CD4-positive, alpha-beta T cell (primary cell): ENCODE measurements at regions of chr16 and their contacts with region 1.

Region 1: GRCh38 chr16:84144859-84145639 is at the starts of genes DNAAF1 and HSDL1:
- DNase-seq: peak; percentile 87 to 98 (median 95)
- ATAC-seq: peak; percentile 81
- H3K4me3 ChIP-seq: peak within 1 kb of the TSS; percentile 79
- H3K4me3 Mint-ChIP-seq: peak within 1 kb of the TSS; percentile 93
- H3K27ac ChIP-seq: peak within 1 kb of the TSS in 1 of 2 donors; percentile 59
- H3K27ac Mint-ChIP-seq: peak within 1 kb of the TSS; percentile 85
- H3K4me1 ChIP-seq: peaks cover 20% of the 10 kb centered on the region
- H3K4me1 Mint-ChIP-seq: peaks cover 18% of the 10 kb centered on the region
- H3K27me3 ChIP-seq: peaks cover 0 to 7% of the 10 kb centered on the region in 2 experiments
- H3K27me3 Mint-ChIP-seq: no peaks in the 10 kb centered on the region
- CTCF ChIP-seq: no peak
- total RNA-seq, gene DNAAF1: not detected
- total RNA-seq, gene HSDL1: 9.4 to 12.1 TPM

Region 2: DNA sequence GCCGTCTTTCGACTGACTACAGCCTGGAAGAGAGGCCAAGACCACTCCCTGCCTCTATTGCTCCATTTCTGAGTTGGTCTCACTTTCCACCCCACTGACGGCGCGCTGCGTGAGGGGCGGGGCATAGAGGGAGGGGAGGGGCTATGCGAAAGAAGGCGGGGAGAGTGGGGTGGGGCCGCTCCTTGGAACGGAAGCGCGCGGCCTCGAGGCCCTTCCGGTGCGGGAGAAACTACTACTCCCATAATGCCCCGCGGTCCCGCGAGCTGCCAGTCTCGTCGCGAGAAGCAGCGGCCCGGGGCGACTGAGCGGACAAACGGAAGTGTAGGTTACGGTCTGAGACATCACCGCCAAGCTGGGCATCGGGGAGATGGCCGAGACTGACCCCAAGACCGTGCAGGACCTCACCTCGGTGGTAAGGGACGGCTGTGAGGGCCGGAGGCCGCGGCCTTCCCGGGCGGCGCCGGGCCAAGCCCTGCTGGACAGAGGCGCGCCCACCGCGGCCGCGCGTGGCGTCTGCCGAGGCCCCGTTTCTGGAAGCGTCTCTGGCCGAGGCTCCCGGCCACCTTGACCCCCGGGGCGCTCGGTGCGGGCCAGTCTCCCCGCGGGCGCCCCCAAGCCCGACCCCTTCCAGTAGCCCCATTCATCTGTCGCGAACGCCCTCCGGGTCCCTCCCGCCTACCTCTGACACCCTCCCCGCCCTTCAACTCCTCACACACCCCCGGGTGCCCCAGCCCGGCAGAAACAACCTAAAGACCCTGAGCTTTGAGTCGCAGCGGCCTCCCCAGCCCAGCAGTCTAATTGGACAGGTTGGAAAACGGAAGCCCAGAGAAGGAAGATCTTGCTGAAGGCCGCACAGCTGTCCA is 337.1 kb before region 1 on chr16 and contains the start of gene HSBP1:
- CTCF ChIA-PET with region 1: no interaction called
- POLR2A ChIA-PET with region 1: no interaction called
- intact Hi-C with region 1: loop called in 1 of 2 experiments (anchors 2 kb)
- DNase-seq: peak; percentile 89 to 96 (median 91)
- ATAC-seq: peak; percentile 99
- H3K4me3 ChIP-seq: peak within 1 kb of the TSS; percentile 86
- H3K4me3 Mint-ChIP-seq: peak within 1 kb of the TSS; percentile 100
- H3K27ac ChIP-seq: peak within 1 kb of the TSS; percentile 46 to 74
- H3K27ac Mint-ChIP-seq: peak within 1 kb of the TSS; percentile 93
- H3K4me1 ChIP-seq: peaks cover 28% of the 10 kb centered on the region
- H3K4me1 Mint-ChIP-seq: peaks cover 43% of the 10 kb centered on the region
- H3K27me3 ChIP-seq: no peaks in the 10 kb centered on the region
- H3K27me3 Mint-ChIP-seq: no peaks in the 10 kb centered on the region
- CTCF ChIP-seq: no peak
- total RNA-seq, gene HSBP1: 17.4 to 21.9 TPM

Region 3: GRCh38 chr16:84084570-84085270 is 60.3 kb before region 1 on chr16:
- CTCF ChIA-PET with region 1: interaction called, 4 read pairs
- POLR2A ChIA-PET with region 1: no interaction called
- intact Hi-C with region 1: loop called (anchors 1 to 2 kb)
- DNase-seq: peak; percentile 50 to 87 (median 64)
- ATAC-seq: peak; percentile 85
- H3K4me3 ChIP-seq: no peak overlapping the region
- H3K4me3 Mint-ChIP-seq: peak overlapping the region; percentile 42
- H3K27ac ChIP-seq: no peak overlapping the region
- H3K27ac Mint-ChIP-seq: peak overlapping the region; percentile 63
- H3K4me1 ChIP-seq: peaks cover 28% of the 10 kb centered on the region
- H3K4me1 Mint-ChIP-seq: peaks cover 48% of the 10 kb centered on the region
- H3K27me3 ChIP-seq: no peaks in the 10 kb centered on the region
- H3K27me3 Mint-ChIP-seq: no peaks in the 10 kb centered on the region
- CTCF ChIP-seq: peak; percentile 81

Region 4: GRCh38 chr16:84116720-84117493 is 28.1 kb before region 1 on chr16 and contains the start of gene MBTPS1:
- CTCF ChIA-PET with region 1: interaction called, 12 read pairs
- POLR2A ChIA-PET with region 1: interaction called, 38 read pairs
- intact Hi-C with region 1: loop called (anchors 1 to 2 kb)
- DNase-seq: peak; percentile 94 to 99 (median 98)
- ATAC-seq: peak; percentile 84
- H3K4me3 ChIP-seq: peak within 1 kb of the TSS; percentile 91
- H3K4me3 Mint-ChIP-seq: peak within 1 kb of the TSS; percentile 96
- H3K27ac ChIP-seq: peak within 1 kb of the TSS; percentile 84 to 85
- H3K27ac Mint-ChIP-seq: peak within 1 kb of the TSS; percentile 98
- H3K4me1 ChIP-seq: peaks cover 37% of the 10 kb centered on the region
- H3K4me1 Mint-ChIP-seq: peaks cover 34% of the 10 kb centered on the region
- H3K27me3 ChIP-seq: no peaks in the 10 kb centered on the region
- H3K27me3 Mint-ChIP-seq: no peaks in the 10 kb centered on the region
- CTCF ChIP-seq: peak; percentile 49
- total RNA-seq, gene MBTPS1: 121 to 122 TPM